Activated T-helper 2 cell treated with anti-CD3 and anti-CD28 coated beads, Interferon-gamma antibody, Interleukin-2, Interleukin-4, amounts not matched to agents 10 μg/mL and 5 μg/mL and 100 μg/mL, durations not matched to agents 14 hours and 24 hours and 36 hours (primary cell): ENCODE measurements at regions of chr10 and their contacts with region 1.

Region 1: DNA sequence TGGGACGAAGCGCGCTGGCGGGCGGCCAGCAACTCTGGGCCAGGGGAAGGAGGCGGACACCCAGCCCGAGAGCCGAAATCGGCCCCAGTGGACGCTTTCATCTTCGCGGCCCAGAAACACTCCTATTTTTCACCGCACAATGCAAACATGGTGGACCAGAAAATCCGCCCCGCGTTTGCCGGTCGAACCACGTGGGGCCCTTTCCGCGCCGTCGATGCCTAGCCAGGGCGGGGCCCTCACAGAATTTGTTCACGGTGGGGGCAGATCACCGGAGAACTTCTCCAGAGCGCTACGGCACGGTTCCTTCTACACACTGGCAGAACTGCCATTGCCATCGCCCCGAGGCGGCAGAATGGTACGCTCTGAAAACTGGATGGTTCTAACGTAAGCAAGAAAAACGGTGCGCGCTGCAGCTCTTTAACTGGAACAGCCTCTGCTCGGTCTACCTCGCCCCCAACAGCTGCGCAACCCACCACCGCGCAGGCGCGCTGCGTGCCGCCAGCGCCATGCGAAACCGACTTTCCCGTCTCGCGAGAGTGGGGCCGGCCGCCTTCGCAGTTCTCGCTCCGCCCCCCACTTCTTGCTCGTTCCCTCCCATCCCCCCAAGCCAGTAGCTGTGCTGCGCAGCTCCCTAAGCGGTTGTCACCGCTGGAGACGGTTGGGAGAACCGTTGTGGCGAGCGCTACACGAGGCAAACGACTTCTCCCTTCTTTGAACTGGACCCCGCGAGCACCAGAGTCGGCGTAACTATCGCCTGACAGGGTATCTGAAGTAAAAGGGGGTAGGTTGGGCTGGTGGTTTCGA is at the start of gene HNRNPH3:
- DNase-seq: peak; percentile 98
- H3K4me3 Mint-ChIP-seq: peak within 1 kb of the TSS; percentile 99
- H3K27ac Mint-ChIP-seq: peak within 1 kb of the TSS; percentile 100
- H3K4me1 Mint-ChIP-seq: peaks cover 45% of the 10 kb centered on the region
- H3K27me3 Mint-ChIP-seq: no peaks in the 10 kb centered on the region
- total RNA-seq, gene HNRNPH3: 172 and 183 TPM in 2 replicates

Region 2: GRCh38 chr10:67884313-67884841 is 447.3 kb before region 1 on chr10 and contains the start of gene SIRT1:
- intact Hi-C with region 1: loop called (anchors 2 kb)
- DNase-seq: peak; percentile 93
- H3K4me3 Mint-ChIP-seq: peak within 1 kb of the TSS; percentile 91
- H3K27ac Mint-ChIP-seq: peak within 1 kb of the TSS; percentile 97
- H3K4me1 Mint-ChIP-seq: peaks cover 19% of the 10 kb centered on the region
- H3K27me3 Mint-ChIP-seq: peaks cover 2% of the 10 kb centered on the region
- total RNA-seq, gene SIRT1: 25.3 and 25.6 TPM in 2 replicates

Region 3: GRCh38 chr10:68053553-68053952 is 278.1 kb before region 1 on chr10:
- intact Hi-C with region 1: no loop called
- DNase-seq: no peak
- H3K4me3 Mint-ChIP-seq: no peak overlapping the region
- H3K27ac Mint-ChIP-seq: no peak overlapping the region
- H3K4me1 Mint-ChIP-seq: peaks cover 6% of the 10 kb centered on the region
- H3K27me3 Mint-ChIP-seq: no peaks in the 10 kb centered on the region

Region 4: DNA sequence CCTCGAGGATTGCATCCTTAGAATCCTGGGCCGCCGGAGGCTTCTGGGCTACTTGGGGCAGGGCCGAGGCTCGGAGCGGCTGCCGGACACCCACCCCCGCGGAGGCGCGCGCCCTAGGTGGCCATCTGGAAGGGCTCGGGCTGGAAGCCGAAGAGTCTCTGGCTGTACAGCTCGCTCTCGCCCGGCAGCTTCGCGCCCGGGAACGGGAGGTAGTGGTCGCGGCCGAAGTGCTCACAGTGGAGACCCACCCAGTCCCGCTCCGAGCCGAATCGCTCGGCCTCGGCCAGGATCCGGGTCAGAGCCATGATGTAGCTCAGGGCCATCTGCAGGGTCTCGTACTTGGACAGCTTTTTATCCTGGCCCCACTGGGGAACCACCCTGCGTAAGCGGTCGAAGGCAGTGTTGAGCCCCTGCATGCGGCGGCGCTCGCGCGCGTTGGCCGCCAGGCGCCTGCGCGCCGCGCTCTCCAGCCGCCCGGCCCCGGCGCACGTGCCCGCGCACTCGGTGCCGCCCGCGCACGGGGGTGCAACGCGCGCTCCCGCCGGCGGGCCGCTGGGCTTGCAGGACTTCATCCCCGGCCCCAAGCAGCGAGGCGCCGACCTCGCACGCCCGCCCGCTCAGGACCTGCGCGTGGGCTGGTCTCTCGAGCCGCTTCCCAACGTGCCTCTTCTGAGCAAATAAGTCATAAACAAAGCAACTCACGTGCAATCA is 100.4 kb before region 1 on chr10:
- intact Hi-C with region 1: loop called (anchors 5 kb)
- DNase-seq: peak; percentile 26
- H3K4me3 Mint-ChIP-seq: peak overlapping the region; percentile 76
- H3K27ac Mint-ChIP-seq: no peak overlapping the region
- H3K4me1 Mint-ChIP-seq: peaks cover 7% of the 10 kb centered on the region
- H3K27me3 Mint-ChIP-seq: peaks cover 50% of the 10 kb centered on the region

Region 5: DNA sequence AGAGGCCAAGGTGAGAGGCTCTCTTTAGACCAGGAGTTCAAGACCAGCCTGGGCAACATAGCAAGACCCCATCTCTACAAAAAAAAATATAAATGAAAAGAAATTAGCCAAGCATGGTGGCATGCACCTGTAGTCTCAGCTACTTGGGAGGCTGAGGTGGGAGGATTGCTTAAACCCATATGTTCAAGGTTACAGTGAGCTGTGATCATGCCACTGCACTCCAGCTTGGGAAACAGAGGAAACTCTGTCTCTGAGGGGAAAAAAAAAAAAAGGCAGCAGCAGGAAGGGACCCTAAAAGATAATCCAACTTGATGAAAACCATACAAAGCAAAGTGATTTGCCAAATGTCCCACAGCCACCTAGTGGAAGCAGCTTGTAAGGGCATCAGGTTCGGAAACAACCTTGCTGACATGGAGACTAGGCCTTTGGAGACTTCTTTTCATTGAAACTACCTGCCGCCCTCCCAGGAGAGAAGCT is 16.6 kb after region 1 on chr10:
- intact Hi-C with region 1: loop called (anchors 2 kb)
- DNase-seq: peak; percentile 25
- H3K4me3 Mint-ChIP-seq: no peak overlapping the region
- H3K27ac Mint-ChIP-seq: peak overlapping the region; percentile 51
- H3K4me1 Mint-ChIP-seq: peaks cover 15% of the 10 kb centered on the region
- H3K27me3 Mint-ChIP-seq: no peaks in the 10 kb centered on the region

Region 6: DNA sequence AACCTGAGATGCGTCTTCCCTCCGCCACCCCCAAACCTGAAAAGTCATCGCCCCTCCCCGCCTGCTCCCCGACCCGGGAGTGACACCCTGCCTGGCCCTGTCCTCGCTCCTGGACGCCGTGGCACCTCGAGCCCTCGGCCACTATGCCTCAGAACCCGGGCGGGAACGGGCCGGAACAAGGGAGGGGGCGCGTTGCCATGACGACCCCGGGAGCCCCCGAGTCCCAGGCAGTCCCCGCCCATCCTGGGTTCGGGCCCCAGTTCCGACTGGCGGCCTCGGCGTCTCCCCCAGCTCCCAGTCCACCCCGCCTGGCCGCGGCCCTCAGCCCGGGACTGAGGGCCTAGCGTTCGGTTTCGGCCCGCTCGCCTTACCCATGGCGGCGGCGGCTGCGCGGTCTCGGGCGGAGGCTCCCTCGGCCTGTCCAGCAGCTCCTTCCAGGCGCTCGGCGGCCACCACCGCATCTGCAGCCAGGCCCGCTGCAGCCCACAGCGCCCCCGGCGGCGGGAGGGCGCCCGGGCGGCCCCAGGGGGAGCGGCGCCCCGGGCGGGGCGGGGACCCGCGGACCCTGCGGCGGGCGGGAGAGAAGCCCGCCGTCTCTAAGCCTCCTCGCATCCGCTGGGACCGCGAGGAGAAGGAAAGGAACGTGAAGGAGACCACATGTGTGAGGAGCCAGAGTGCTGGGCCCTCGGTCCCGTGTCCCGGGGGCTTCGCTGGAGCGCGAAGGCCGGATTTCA is 75.3 kb after region 1 on chr10 and contains the start of gene RUFY2:
- intact Hi-C with region 1: loop called (anchors 2 kb)
- DNase-seq: peak; percentile 75
- H3K4me3 Mint-ChIP-seq: peak within 1 kb of the TSS; percentile 87
- H3K27ac Mint-ChIP-seq: peak within 1 kb of the TSS; percentile 80
- H3K4me1 Mint-ChIP-seq: peaks cover 14% of the 10 kb centered on the region
- H3K27me3 Mint-ChIP-seq: no peaks in the 10 kb centered on the region
- total RNA-seq, gene RUFY2: 11.3 and 12.1 TPM in 2 replicates

Region 7: DNA sequence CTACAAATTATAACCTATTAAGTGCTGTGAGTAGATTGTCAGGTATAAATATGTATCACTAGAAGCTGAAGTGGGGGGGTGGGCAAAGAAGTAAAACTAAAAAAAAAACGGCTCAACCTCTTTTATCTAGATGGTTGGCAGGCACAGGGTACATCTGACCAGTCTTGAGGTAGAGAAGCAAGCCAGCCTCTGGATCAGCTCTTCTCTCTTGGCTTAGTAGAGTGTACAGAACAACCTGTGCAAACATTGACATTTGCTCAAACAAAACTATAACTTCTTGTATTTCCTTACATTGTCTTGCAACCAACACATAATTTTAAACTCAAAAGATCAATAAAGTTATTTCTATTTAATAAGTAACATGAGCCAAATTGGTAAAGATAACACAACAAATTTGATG is 114.5 kb after region 1 on chr10:
- intact Hi-C with region 1: no loop called
- DNase-seq: no peak
- H3K4me3 Mint-ChIP-seq: no peak overlapping the region
- H3K27ac Mint-ChIP-seq: no peak overlapping the region
- H3K4me1 Mint-ChIP-seq: no peaks in the 10 kb centered on the region
- H3K27me3 Mint-ChIP-seq: no peaks in the 10 kb centered on the region

Region 8: DNA sequence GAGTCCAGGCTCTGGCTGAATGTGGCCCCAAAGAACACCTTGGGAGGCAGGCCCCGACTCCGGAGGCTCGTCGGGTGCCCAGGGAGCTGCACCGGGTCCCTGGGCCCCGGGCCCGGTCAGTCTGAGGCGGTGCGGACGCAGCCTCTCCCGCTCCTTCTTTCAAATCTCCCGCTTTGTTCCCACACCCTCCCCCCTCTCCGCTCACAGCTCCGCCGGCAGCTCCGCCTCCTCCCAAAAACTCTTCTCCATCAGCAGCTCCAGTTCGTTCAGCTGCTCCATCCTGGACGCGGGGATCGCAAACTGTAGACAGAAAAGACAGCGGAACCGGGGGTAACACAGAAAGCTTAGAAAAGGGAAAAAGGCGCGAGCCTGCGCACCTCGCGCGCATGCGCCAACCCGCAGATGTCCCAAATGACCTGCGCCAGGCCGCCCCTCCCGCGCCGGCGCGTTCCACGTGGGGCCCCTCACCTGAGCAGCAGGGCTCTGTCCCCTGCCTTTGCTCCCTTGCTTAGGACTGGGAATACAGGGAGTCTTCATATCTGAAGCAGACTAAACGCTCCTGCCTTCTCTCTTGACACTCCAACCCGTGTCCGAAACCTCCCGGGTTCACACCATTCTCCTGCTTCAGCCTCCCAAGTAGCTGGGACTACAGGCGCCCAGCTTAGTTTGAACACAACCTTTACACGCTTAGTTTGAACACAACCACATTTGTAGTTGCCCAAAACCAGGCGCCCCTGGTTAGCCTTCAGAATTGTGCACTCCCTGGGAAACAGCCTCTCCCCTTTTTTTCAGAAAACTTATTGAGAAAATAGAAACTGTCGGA is 140.1 kb after region 1 on chr10 and contains the start of gene DNA2:
- intact Hi-C with region 1: loop called (anchors 5 kb)
- DNase-seq: peak; percentile 79
- H3K4me3 Mint-ChIP-seq: peak within 1 kb of the TSS; percentile 97
- H3K27ac Mint-ChIP-seq: peak within 1 kb of the TSS; percentile 95
- H3K4me1 Mint-ChIP-seq: peaks cover 26% of the 10 kb centered on the region
- H3K27me3 Mint-ChIP-seq: no peaks in the 10 kb centered on the region
- total RNA-seq, gene DNA2: 51.6 and 54.3 TPM in 2 replicates

Region 9: DNA sequence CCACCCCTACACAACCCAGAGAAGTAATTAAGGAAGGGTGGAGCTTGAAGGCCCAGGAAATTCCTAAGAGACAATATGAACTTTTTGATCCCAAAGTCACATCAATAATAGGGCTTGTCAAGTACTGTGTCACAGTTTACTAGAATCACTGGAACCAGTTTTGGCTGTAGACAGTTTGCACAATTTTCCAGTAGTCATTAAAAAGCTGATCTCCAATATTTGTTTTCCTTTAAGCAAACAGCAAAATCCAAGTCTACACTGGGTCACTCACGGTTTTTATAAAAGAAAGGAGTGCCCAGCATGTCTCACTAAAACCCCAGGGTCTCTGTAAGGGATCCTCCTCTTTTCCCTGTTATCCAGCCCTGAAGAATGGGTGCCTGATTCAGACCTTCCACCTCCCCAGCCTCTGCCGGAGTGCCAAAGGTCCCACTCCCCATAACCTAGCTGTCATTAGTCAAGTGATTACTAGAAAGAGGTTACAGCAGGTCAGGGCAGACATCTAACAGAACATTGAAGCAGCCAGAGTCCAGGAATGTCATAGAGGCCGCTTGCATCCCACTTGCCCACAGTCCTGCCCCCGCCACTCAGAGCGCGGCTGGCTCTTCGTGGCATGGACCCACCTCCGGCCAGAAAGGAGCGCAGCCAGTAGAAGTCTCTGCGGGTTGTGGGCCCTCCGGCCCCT is 195.1 kb after region 1 on chr10:
- intact Hi-C with region 1: loop called (anchors 1 kb)
- DNase-seq: no peak
- H3K4me3 Mint-ChIP-seq: peak overlapping the region; percentile 92
- H3K27ac Mint-ChIP-seq: peak overlapping the region; percentile 88
- H3K4me1 Mint-ChIP-seq: peaks cover 8% of the 10 kb centered on the region
- H3K27me3 Mint-ChIP-seq: no peaks in the 10 kb centered on the region

Region 10: GRCh38 chr10:68895041-68895440 is 563.4 kb after region 1 on chr10:
- intact Hi-C with region 1: no loop called
- DNase-seq: no peak
- H3K4me3 Mint-ChIP-seq: no peak overlapping the region
- H3K27ac Mint-ChIP-seq: no peak overlapping the region
- H3K4me1 Mint-ChIP-seq: peaks cover 10% of the 10 kb centered on the region
- H3K27me3 Mint-ChIP-seq: peaks cover 11% of the 10 kb centered on the region